PC-9 (cell line): ENCODE measurements at regions of chr18 and their contacts with region 1.

Region 1: DNA sequence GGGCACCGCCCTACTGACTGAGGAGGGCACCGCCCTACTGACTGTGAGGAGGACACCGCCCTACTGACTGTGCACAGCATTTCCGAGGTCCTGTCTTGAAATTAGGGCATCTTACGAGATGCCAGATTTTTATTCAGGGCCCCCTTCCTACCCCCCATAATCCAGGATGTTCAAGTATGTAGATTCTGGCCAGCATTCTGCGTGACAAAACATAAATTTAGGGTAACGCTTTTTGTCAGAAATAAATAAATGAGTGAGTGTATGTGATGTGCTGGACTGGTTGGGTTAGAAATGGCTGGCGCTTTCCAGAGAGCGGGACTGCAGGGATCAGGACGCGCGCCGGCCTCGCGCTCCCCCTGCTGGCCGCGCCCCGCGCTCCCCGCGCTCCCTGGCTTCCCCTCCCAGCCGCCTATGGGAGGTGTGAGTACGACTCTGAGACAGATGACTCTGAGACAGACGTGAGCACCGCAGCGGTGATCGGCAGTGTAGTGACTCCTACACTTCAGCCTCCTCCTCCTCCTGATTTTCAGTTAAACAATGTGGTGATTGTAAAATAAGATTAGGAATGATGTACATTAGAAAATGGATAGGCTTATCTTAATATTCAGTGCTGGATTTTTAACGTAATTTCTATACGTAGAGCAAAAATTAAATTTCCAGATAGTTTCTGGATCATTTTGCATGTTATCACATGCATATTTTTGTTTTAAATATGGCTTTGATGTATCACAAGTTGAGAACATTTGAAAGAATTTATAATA is 149.2 kb upstream of the NFATC1 start:
- DNase-seq: peak; percentile 68 to 80
- H3K4me3 ChIP-seq: peak overlapping the region; percentile 43; the same call in 1 of the 2 replicates
- H3K27ac ChIP-seq: peak overlapping the region; percentile 81
- H3K4me1 ChIP-seq: peaks cover 8% of the 10 kb centered on the region
- H3K27me3 ChIP-seq: no peaks in the 10 kb centered on the region
- CTCF ChIP-seq: peak; percentile 94

Region 2: DNA sequence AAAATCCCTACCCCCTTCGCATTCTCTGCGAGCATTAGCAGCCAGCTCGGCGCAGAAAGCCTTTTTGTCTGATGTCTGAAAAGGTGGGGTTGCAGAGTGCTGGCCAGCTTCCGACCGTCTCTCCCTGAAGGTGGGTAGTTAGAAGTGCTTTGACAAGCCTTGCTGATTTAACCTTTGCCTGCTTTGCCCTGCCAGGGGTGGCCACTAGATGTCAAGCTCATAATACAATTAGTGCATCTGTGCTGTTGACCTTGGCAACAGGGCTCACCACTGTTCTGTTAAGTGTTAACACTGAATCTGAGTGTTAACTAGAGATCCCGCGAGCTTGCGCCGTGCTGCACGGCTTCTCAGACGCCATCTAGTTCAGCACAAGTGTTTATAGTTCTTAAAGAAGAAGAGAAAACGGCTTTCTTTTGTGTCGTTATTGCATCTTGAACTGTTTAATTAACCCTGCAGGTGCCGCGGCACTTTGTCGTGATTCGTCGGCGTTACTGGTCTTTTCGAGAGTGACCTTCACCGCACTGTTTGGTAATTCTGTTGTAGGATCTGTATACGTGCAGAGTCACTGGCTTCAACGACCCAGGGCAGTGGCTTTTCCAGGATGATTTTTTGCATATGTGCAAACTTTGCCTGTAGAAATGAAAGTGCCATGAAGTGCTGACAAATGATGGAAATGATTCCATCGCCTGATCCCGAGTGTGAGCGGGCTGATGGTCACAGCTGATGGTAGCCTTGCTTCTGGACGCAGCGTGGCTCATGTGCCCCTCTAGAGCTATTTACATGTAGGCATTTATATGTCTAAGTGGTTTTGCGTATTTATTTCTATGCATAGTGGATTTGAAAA is 261.4 kb before region 1 on chr18:
- CTCF ChIA-PET with region 1: no interaction called
- POLR2A ChIA-PET with region 1: no interaction called
- intact Hi-C with region 1: loop called (anchors 10 kb)
- DNase-seq: peak in 1 of 2 experiments; percentile 4
- H3K4me3 ChIP-seq: no peak overlapping the region
- H3K27ac ChIP-seq: no peak overlapping the region
- H3K4me1 ChIP-seq: no peaks in the 10 kb centered on the region
- H3K27me3 ChIP-seq: peaks cover 41% of the 10 kb centered on the region
- CTCF ChIP-seq: peak; percentile 49

Region 3: DNA sequence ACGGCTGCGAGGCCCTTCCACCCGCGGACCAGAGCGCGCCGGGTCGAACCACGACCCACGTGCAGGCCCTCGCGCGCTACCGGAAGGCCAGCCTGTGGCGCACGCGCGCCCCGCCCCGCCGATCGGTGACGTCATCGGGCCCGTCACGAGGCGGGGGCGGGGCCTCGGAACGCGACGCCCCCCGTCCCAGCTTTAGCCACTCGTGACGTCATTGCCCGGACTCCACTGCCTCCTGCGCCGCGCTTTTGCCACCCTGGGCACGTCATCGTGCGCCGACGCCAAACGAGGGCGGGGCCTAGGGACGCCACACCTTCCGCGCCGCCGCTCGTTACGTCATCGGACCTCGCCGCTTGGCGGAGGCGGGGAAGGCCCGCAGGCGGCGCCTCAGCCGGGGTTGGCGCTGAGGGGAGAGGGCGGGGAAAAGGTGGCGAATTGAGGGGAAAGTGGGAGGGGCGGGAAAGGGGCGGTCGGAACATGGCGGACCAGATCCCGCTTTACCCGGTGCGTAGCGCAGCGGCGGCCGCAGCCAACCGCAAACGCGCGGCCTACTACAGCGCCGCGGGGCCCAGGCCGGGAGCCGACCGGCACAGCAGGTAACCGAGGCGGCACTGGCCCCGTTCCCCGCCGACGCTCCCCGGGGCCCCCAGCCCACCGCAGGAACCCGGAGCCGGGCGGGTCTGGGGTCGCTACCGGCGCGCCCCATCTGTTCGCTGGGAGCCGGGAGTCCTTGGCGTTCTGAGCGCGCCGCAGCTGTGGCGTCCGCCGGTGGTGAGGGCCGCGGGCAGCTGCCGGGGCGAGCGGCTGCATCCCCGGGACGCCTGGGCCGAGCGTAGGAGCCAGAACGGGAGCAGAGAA is 177.4 kb before region 1 on chr18 and contains the start of gene ATP9B:
- CTCF ChIA-PET with region 1: no interaction called
- POLR2A ChIA-PET with region 1: no interaction called
- intact Hi-C with region 1: loop called (anchors 1 kb)
- DNase-seq: peak; percentile 76 to 87
- H3K4me3 ChIP-seq: peak within 1 kb of the TSS; percentile 97
- H3K27ac ChIP-seq: peak within 1 kb of the TSS; percentile 60
- H3K4me1 ChIP-seq: peaks cover 10% of the 10 kb centered on the region
- H3K27me3 ChIP-seq: no peaks in the 10 kb centered on the region
- CTCF ChIP-seq: no peak
- total RNA-seq, gene ATP9B: 8.6 and 13.0 TPM in 2 replicates